Aorta (tissue), 5 donors: ENCODE measurements at regions of chr5 and their contacts with region 1.

Region 1: GRCh38 chr5:96614110-96614691 is 48.0 kb upstream of the CAST start:
- DNase-seq: no peak
- ATAC-seq: peak; percentile 85
- H3K4me3 ChIP-seq: no peak overlapping the region
- H3K27ac ChIP-seq: peak overlapping the region in 1 of 2 donors; percentile 76
- H3K4me1 ChIP-seq: no peaks in the 10 kb centered on the region
- H3K27me3 ChIP-seq: no peaks in the 10 kb centered on the region

Region 2: GRCh38 chr5:96662725-96663513 is 48.7 kb after region 1 on chr5:
- intact Hi-C with region 1: loop called in 1 of 2 experiments (anchors 5 kb)
- DNase-seq: peak; percentile 95 to 98
- ATAC-seq: peak; percentile 96
- H3K4me3 ChIP-seq: peak overlapping the region; percentile 75 to 88
- H3K27ac ChIP-seq: peak overlapping the region; percentile 74 to 87
- H3K4me1 ChIP-seq: peaks cover 0 to 2% of the 10 kb centered on the region in 2 donors
- H3K27me3 ChIP-seq: no peaks in the 10 kb centered on the region

Region 3: DNA sequence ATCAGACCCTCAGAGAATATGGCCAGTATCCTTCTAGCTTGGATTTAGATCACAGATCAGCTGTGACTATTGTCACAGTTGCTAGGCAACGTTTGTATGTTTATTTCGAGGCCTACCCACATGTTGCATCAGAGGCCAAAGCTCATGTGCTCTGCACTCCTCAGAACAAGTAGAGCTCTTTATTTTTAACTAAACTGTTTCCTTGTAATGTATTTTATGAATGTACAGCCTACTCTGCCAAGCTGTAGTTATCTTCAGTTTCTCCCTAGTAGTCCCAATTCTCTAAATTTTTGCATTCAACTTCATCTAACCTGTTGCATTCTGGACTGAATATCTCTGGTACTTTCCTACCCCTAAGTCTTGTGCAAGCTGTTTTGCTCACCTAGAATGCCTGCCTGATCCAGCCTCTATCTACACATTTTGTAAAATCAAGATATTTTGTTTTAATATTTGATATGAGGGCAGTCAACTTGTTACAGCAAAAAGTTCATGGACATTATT is 100.8 kb after region 1 on chr5:
- intact Hi-C with region 1: loop called (anchors 10 kb)
- DNase-seq: no peak
- ATAC-seq: peak; percentile 69
- H3K4me3 ChIP-seq: no peak overlapping the region
- H3K27ac ChIP-seq: peak overlapping the region in 1 of 2 donors; percentile 63
- H3K4me1 ChIP-seq: peaks cover 3 to 10% of the 10 kb centered on the region in 2 donors
- H3K27me3 ChIP-seq: no peaks in the 10 kb centered on the region

Region 4: DNA sequence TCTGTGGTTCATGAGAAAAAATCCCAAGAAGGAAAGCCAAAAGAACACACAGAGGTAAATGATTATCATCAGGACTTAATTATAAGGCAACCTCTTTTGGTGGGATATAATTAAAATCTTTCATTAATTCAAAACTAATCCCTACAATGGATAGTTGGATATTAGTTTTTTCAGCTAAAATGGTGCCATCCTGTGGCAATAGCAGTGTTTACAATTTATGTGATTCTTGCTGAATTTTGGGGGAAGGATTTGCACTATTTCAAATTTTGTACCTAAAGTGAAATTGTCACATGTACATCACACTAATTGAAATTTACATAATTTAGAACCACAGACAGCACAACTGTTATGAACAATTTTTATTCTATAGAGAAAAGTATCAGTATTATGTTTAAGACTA is 115.0 kb after region 1 on chr5:
- intact Hi-C with region 1: loop called in 1 of 2 experiments (anchors 10 kb)
- DNase-seq: no peak
- ATAC-seq: no peak
- H3K4me3 ChIP-seq: no peak overlapping the region
- H3K27ac ChIP-seq: no peak overlapping the region
- H3K4me1 ChIP-seq: no peaks in the 10 kb centered on the region
- H3K27me3 ChIP-seq: no peaks in the 10 kb centered on the region